Dendritic cell treated with granulocyte-macrophage colony-stimulating factor and Interleukin-4, amounts not matched to agents 40 ng/mL and 50 ng/mL, for 4 days (primary cell): ENCODE measurements at regions of chr15 and their contacts with region 1.

Region 1: GRCh38 chr15:22980189-22981050 is at the start of gene CYFIP1:
- H3K4me3 Mint-ChIP-seq: peak within 1 kb of the TSS; percentile 90
- H3K27ac Mint-ChIP-seq: peak within 1 kb of the TSS; percentile 84
- H3K4me1 Mint-ChIP-seq: peaks cover 13% of the 10 kb centered on the region
- H3K27me3 Mint-ChIP-seq: peaks cover 4% of the 10 kb centered on the region

Region 2: DNA sequence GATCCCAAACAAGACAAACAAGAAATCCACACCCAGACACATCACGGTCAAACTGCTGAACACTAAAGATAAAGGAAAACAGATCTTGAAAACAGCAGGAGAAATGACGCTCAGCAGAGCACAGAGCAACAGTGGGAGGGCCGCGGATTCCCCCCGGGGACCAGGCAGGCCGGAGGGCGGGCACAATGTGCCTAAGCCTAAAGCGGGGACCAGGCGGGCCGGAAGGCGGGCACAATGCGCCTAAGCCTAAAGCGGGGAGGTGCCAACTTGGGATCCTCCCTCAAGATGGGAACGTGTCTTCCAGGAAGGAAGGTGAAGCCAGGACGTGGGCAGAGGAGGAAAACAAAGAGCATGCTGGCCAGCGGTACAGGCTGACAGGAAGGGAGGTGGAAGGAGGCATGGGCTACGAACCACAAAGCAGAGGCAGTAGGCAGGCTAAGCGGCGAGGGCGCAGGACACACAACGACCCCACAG is 31.3 kb before region 1 on chr15:
- intact Hi-C with region 1: loop called (anchors 5 kb)
- H3K4me3 Mint-ChIP-seq: peak overlapping the region; percentile 27
- H3K27ac Mint-ChIP-seq: peak overlapping the region; percentile 78
- H3K4me1 Mint-ChIP-seq: peaks cover 65% of the 10 kb centered on the region
- H3K27me3 Mint-ChIP-seq: no peaks in the 10 kb centered on the region

Region 3: GRCh38 chr15:23003736-23004135 is 23.3 kb after region 1 on chr15:
- intact Hi-C with region 1: no loop called
- H3K4me3 Mint-ChIP-seq: no peak overlapping the region
- H3K27ac Mint-ChIP-seq: no peak overlapping the region
- H3K4me1 Mint-ChIP-seq: no peaks in the 10 kb centered on the region
- H3K27me3 Mint-ChIP-seq: no peaks in the 10 kb centered on the region

Region 4: DNA sequence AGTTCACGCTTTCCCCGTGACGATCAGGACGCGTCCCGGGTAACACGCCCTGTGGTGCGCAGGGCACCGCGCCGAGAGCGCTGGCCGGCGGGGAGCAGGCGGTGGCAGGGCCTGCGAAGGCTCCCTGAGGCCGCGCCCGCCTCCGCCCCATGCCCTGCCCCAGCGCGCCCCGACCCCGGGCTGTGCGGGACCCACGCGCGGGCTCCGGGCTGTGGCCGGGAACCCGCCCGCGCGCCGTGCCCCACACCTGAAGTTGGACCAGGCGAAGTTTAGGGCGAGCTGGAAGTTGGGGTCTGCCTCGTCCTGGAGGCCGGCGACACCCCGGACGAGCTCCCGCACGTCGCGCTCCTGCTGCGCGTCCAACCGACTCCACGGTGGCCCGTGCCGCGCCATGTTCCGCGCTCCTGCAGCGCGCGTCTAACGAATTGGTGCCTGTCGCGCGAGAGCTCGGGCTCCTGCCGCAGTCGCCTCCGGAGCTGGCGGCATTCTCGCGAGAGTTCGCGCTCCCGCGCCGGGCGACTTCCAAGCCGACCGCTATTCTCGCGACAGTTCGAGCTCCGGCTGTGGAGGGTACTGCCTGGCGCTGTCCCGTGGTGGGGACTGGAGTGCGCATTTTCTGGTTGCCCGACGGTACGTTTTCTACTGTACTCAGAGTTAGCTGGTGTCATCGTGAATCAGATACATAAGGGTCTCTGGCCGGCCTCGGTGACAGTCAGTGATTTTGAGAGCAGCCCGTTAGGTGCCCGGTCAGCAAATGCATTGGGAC is 58.9 kb after region 1 on chr15 and contains the start of gene TUBGCP5:
- intact Hi-C with region 1: loop called (anchors 2 kb)
- H3K4me3 Mint-ChIP-seq: peak within 1 kb of the TSS; percentile 88
- H3K27ac Mint-ChIP-seq: peak within 1 kb of the TSS; percentile 86
- H3K4me1 Mint-ChIP-seq: peaks cover 16% of the 10 kb centered on the region
- H3K27me3 Mint-ChIP-seq: no peaks in the 10 kb centered on the region

Region 5: GRCh38 chr15:23073890-23074646 is 93.6 kb after region 1 on chr15:
- intact Hi-C with region 1: no loop called
- H3K4me3 Mint-ChIP-seq: peak overlapping the region; percentile 5
- H3K27ac Mint-ChIP-seq: no peak overlapping the region
- H3K4me1 Mint-ChIP-seq: no peaks in the 10 kb centered on the region
- H3K27me3 Mint-ChIP-seq: no peaks in the 10 kb centered on the region

Region 6: DNA sequence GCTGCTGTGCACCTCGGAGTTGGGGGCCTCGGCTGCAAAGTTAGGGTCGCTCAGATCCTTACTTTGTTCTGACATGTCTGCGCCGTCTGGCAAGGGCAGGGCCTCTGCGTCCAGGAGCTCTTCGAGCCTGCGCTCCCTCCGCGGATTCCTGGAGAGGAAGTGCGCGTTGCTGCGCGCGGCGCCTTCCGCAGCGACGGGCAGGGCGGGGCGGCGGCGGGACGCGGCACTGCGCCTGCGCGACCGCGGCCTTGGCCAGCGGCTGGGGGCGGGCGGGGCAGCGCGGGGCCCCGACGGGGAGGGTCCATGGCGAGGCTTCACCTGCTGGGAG is 706.7 kb after region 1 on chr15 and contains the start of gene NDN:
- intact Hi-C with region 1: no loop called
- H3K4me3 Mint-ChIP-seq: peak within 1 kb of the TSS; percentile 41
- H3K27ac Mint-ChIP-seq: no peak within 1 kb of the TSS
- H3K4me1 Mint-ChIP-seq: no peaks in the 10 kb centered on the region
- H3K27me3 Mint-ChIP-seq: peaks cover 4% of the 10 kb centered on the region